Left ventricle myocardium inferior (tissue), 1 donor: ENCODE measurements at regions of chr2 and their contacts with region 1.

Region 1: DNA sequence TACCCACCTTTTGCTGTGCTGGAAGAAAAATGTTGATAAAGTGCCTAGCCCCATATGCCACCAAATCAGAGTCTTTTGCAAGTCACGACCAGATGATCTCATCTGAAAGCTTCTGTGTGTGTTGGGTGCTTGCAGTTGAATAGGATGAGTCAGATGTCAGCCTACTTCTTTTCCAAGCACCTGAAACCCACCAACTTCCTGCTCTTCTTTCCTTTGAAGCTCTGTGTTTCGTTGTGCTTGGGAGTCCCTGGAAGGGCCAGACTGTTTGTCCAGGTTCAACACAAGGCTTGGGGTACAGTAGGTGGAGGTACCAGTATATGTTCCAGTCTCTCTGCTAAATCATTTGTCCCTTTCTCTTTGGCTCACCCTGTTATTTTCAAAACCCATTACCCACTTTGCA is 36.8 kb upstream of the LCLAT1 start:
- DNase-seq: no peak
- H3K4me3 ChIP-seq: no peak overlapping the region
- H3K27ac ChIP-seq: peak overlapping the region; percentile 92
- H3K4me1 ChIP-seq: peaks cover 80% of the 10 kb centered on the region
- H3K27me3 ChIP-seq: no peaks in the 10 kb centered on the region
- CTCF ChIP-seq: no peak

Region 2: DNA sequence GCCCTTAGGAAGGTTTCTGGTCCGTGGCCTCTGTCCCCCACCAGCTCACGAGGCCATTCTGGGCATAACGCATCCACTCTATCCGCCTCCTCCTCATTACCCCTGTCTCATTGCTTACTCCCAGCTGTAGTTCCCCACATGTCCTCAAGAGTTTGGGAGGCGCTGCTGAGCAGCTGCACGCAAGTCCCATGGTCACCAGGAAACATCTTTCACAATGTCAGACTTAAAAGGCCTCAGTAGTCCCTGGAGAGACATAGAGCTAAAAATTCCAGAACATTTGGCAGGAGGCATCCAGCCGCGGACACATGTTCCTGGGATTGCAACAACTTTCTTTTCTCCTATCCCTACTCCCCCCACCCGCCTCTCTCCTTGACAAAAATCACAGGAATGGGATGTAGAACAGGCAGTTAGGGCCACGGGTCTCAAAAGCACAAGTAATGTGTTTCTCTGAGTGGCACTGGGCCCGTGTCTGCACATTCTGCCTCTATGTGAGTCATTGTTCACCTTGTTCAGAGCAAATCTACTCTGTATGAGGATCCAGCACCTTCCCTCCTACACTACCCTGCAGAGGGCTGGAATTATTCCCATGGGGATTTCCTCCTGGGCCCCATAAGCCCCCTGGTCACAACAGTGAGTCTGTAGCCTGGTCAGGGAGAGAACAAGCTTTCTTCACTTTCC is 170.8 kb before region 1 on chr2:
- intact Hi-C with region 1: loop called (anchors 5 kb)
- DNase-seq: peak; percentile 76
- H3K4me3 ChIP-seq: peak overlapping the region; percentile 42
- H3K27ac ChIP-seq: peak overlapping the region; percentile 99
- H3K4me1 ChIP-seq: peaks cover 100% of the 10 kb centered on the region
- H3K27me3 ChIP-seq: no peaks in the 10 kb centered on the region
- CTCF ChIP-seq: peak; percentile 96

Region 3: DNA sequence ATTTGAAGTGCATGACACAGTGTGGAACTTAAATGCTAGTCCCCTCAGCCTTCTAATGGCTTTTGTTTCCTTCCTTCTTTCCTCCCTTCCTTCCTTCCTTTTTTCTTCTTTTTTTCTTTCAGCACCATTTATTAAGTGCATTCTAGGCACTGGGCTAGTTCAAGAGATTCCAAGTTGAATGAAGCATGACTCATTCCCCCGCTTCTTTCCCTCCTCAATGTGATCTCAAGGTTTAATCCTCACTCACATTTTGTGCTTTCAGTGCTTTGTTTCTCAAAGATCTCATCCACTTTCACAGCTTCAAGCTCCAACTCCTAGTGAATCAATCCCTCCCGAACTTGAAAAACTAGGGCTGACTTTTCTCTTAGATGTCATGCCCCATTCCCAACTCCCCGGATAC is 88.8 kb before region 1 on chr2:
- intact Hi-C with region 1: no loop called
- DNase-seq: no peak
- H3K4me3 ChIP-seq: no peak overlapping the region
- H3K27ac ChIP-seq: no peak overlapping the region
- H3K4me1 ChIP-seq: no peaks in the 10 kb centered on the region
- H3K27me3 ChIP-seq: no peaks in the 10 kb centered on the region
- CTCF ChIP-seq: no peak

Region 4: GRCh38 chr2:30351116-30351515 is 59.1 kb before region 1 on chr2:
- intact Hi-C with region 1: loop called (anchors 10 kb)
- DNase-seq: peak; percentile 66
- H3K4me3 ChIP-seq: peak overlapping the region; percentile 4
- H3K27ac ChIP-seq: peak overlapping the region; percentile 86
- H3K4me1 ChIP-seq: peaks cover 74% of the 10 kb centered on the region
- H3K27me3 ChIP-seq: no peaks in the 10 kb centered on the region
- CTCF ChIP-seq: no peak